ENCODE measurements at regions of chr1 and their contacts with region 1.

Region 1: DNA sequence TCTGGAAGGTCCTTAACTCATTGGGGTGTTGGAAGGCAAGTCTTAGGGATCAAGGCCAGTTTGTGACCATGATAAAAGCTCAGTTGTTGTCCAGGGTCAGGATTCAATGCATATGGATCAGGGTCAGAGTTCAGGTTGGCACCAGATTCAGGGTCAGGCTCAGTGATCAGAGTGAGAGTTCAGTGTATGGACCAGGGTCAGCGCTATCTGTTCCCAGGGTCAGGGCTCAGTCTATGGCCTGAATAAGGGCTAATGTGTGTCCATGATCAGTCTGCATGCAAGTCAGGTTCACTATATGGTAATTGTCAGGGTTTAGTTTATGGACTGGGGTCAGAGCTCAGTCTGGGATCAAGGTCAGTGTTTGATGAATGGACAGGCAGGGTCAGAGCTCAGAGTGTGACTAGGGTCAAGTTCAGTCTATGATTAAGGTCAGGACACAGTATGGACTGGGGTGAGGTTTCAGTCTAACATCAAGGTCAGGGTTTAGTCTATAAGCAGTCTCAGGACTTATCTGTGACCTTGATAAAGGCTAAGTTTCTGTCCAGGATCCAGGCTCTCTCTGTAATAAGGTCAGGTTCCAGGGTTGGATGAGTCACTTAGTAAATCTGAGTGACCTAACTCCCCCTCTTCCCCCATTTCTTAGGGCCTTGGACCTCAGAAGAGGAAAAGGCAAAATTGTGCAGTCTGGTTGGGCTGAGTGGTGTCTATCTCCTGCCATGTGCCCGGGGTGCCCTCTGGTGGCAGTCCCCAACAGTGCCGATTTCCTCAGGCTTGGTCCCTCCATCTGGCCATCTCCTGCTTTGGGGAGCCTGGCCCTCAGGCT is 23.8 kb downstream of the KNCN start:
- DNase-seq: peak; percentile 84 to 93 (median 92)
- ATAC-seq: peak; percentile 76 to 84
- H3K4me3 ChIP-seq: no peak overlapping the region
- H3K27ac ChIP-seq: no peak overlapping the region
- H3K4me1 ChIP-seq: peaks cover under 1% of the 10 kb centered on the region
- H3K27me3 ChIP-seq: no peaks in the 10 kb centered on the region

Region 2: DNA sequence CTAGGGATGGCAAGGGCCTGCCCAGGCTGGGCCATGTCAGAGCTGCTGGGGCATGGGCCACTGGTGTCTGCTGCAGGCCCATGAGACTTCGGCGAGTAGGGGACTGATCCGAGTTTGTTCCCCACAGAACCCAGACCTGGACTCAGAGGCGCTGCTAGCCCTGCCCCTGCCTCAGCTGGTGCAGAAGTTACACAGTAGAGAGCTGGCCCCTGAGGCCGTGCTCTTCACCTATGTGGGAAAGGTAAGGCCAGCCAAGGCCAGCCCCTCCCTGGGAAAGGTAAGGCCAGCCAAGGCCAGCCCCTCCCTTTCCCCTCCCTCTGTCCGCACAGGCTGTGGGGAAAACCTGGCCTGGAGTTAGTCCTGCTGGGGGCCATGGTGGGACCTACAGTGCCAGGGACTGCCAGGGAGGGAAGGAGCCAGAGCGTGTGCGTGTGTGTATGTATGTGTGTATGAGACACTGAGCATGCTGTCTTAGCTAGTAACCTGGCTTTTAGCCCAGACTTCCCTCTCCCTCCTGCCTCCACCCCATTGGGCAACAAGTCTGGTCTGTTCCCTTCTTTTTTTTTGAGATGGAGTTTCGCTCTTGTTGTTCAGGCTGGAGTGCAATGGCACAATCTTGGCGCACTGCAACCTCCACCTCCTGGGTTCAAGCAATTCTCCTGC is 125.6 kb before region 1 on chr1:
- intact Hi-C with region 1: loop called in 3 of 4 experiments (anchors 5 to 10 kb)
- DNase-seq: peak; percentile 63 to 85 (median 82)
- ATAC-seq: peak; percentile 72 to 78
- H3K4me3 ChIP-seq: no peak overlapping the region
- H3K27ac ChIP-seq: no peak overlapping the region
- H3K4me1 ChIP-seq: peaks cover 5% of the 10 kb centered on the region
- H3K27me3 ChIP-seq: no peaks in the 10 kb centered on the region

Region 3: DNA sequence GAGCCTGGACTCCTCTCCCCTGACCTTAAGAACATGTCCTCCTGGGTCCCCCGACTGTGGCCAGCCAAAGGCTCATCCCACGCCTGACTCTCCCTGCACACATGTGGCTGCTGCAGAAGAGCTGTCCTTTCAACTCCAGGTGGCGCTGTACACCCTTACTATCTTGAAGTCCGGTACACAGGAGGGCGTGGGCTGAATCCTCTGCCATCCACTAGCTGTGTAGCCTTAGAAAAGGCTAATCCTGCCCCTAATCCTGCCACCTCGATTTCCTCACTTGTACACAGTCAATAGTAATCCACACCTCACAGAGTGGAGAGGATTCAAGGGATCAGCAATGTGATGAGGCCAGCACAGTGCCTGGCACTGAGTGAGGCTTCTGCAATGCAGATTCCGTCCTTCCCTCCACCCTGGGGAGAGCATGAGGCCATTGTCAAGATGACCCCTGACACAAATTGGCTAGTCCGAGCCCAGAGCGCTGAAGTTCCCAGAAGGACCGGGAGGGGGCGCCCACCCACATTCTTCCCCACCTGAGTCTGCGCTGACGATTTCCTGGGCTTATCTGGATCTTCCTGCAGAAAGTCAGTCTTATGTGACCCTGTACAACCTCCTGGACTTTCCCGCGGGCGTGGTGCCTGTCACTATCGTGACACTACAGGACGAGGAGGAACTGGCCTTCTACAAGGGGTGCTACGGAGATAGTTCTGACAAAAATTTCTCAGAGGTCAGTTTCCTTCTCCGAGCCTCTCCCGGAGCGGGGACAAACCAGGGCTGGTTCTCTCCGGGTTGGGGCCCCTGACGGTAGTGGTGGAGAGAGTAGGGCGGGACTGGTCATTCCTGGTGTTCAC is 85.1 kb before region 1 on chr1:
- intact Hi-C with region 1: loop called in 3 of 4 experiments (anchors 2 to 10 kb)
- DNase-seq: peak; percentile 71 to 88 (median 87)
- ATAC-seq: peak; percentile 69 to 76
- H3K4me3 ChIP-seq: peak overlapping the region; percentile 12
- H3K27ac ChIP-seq: no peak overlapping the region
- H3K4me1 ChIP-seq: peaks cover 2% of the 10 kb centered on the region
- H3K27me3 ChIP-seq: no peaks in the 10 kb centered on the region

Region 4: GRCh38 chr1:46449223-46450159 is 78.2 kb before region 1 on chr1:
- intact Hi-C with region 1: loop called (anchors 2 to 10 kb)
- DNase-seq: no peak
- ATAC-seq: no peak
- H3K4me3 ChIP-seq: no peak overlapping the region
- H3K27ac ChIP-seq: no peak overlapping the region
- H3K4me1 ChIP-seq: no peaks in the 10 kb centered on the region
- H3K27me3 ChIP-seq: no peaks in the 10 kb centered on the region

Region 5: DNA sequence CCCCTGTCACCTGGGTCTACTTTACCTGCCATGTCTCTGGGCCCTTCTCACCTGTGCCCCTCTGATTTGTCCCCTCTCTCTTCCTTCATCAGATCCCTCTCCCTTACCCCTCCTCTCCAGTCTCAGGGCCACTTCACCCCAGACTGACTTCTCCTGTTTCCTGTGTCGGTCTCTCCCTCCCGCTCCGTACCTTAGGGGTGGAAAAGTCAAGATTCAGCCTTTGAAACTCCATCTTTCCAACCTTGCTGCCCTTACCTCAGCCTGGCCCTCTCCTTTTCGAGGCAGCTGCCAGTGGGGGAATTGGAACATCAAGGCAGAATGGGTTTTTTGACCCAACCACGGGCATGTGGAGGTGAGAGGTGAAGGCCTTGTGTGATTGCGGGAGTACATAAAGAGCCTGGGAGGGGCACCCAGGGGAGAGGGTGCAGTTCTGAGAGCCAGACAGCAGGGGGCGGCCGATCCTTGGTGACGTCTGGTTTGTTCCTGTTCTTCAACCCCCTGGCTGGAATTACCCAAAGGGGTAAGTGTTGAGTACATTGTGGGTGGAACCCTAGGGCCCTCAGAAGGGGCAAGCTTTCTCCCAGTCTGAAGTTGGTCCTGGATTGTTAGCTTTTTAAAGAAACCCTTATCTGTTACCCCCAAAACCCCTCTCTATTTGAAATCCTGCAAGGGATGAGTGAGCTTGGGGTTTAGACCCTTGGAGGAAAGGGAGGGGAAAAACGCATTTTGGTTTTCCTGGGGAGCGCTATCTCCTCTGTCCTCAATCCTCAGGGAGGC is 50.3 kb before region 1 on chr1:
- intact Hi-C with region 1: loop called (anchors 2 to 5 kb)
- DNase-seq: peak; percentile 62 to 87 (median 87)
- ATAC-seq: peak; percentile 58 to 76
- H3K4me3 ChIP-seq: no peak overlapping the region
- H3K27ac ChIP-seq: no peak overlapping the region
- H3K4me1 ChIP-seq: no peaks in the 10 kb centered on the region
- H3K27me3 ChIP-seq: no peaks in the 10 kb centered on the region

Region 6: DNA sequence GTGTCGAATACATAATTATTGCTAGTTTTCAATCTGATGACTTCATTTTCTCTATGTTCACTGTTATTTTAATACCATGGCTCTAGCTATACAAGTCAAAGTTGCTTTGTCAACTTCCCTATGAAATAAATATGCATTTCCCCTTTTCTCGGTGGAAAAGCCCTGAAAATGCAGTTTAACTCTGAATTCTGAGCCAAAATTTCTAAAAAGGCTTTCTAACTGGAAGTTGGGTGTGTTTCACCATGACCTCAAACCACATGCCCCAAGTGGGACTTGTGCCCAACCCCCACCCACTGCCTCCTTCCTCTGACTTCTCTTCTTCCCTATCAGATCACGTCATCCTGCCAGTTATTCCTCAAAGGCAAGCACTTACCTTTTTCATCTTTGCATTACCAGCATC is 67.4 kb after region 1 on chr1:
- intact Hi-C with region 1: no loop called
- DNase-seq: peak; percentile 83 to 93 (median 88)
- ATAC-seq: peak; percentile 76 to 78
- H3K4me3 ChIP-seq: no peak overlapping the region
- H3K27ac ChIP-seq: no peak overlapping the region
- H3K4me1 ChIP-seq: peaks cover 4% of the 10 kb centered on the region
- H3K27me3 ChIP-seq: no peaks in the 10 kb centered on the region

Region 7: DNA sequence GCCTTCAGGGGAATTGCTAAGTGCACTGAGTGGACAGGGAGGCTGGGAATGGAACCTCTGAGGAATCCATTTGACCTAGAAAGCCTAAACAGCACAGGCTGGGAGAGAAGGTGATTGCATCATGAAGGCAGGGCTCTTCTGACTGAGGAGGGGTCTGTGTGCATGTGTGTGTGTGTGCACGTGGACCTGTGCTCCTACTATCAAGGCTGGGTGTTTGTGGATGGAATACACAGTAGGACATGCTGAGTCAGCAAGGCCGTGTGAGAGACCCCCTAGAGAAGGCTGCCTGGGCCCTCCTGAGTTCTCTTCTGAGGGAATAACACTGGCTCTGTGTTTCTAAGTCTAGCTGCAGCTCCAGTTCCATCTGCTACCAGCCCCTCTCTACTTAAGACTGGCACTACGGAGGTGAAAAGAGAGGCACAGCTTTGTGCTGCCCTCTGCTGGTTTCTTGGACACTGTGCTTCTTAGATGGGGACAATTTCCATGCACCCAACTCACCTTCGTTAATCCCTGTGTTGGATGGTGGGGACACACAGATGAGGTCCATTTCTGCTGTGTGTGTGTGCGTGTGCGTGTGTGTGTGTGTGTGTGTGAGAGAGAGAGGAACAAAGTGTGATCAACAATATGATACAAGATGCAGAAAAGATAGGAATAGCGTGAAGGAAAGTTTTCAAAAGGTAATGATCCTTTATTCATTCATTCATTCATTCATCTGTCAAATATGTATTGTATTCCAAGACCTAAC is 197.5 kb after region 1 on chr1:
- intact Hi-C with region 1: loop called (anchors 2 to 10 kb)
- DNase-seq: peak; percentile 58 to 83 (median 72)
- ATAC-seq: peak; percentile 92 to 93
- H3K4me3 ChIP-seq: no peak overlapping the region
- H3K27ac ChIP-seq: no peak overlapping the region
- H3K4me1 ChIP-seq: no peaks in the 10 kb centered on the region
- H3K27me3 ChIP-seq: no peaks in the 10 kb centered on the region